Transverse colon (tissue), 4 donors: ENCODE measurements at regions of chr20 and their contacts with region 1.

Region 1: GRCh38 chr20:37498066-37498665 is 22.9 kb upstream of the NNAT start:
- DNase-seq: no peak
- H3K4me3 ChIP-seq: no peak overlapping the region
- H3K27ac ChIP-seq: no peak overlapping the region
- H3K4me1 ChIP-seq: peaks cover 0 to 5% (median 0%) of the 10 kb centered on the region in 4 donors
- H3K27me3 ChIP-seq: no peaks in the 10 kb centered on the region
- CTCF ChIP-seq: no peak
- EP300 ChIP-seq: no peak
- POLR2A ChIP-seq: no peak

Region 2: DNA sequence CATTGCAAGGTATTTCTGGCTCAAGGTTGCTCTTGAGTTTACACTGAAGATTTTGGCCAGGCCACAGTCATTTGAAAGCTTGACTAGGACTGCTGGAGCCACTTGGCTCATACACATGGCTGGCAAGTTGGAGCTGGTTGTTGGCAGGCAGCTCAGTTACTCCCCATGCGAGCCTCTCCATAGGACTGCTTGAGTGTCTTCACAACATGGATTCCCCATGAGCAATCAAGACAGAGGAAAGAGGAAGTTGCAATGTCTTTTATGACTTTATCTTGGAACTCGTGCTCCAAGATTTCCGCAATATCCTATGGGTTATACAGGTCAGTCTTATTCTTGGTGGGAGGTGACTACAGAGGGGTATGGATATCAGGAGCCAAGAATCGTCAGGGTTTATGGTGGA is 210.1 kb before region 1 on chr20:
- in situ Hi-C with region 1: no loop called
- intact Hi-C with region 1: no loop called
- DNase-seq: no peak
- H3K4me3 ChIP-seq: no peak overlapping the region
- H3K27ac ChIP-seq: no peak overlapping the region
- H3K4me1 ChIP-seq: peaks cover 0 to 14% (median 10%) of the 10 kb centered on the region in 4 donors
- H3K27me3 ChIP-seq: no peaks in the 10 kb centered on the region
- CTCF ChIP-seq: no peak
- EP300 ChIP-seq: no peak
- POLR2A ChIP-seq: no peak

Region 3: GRCh38 chr20:37327748-37328147 is 170.4 kb before region 1 on chr20:
- in situ Hi-C with region 1: no loop called
- intact Hi-C with region 1: no loop called
- DNase-seq: peak; percentile 80
- H3K4me3 ChIP-seq: no peak overlapping the region
- H3K27ac ChIP-seq: peak overlapping the region; percentile 72 to 88 (median 81)
- H3K4me1 ChIP-seq: peaks cover 18 to 33% (median 20%) of the 10 kb centered on the region in 4 donors
- H3K27me3 ChIP-seq: no peaks in the 10 kb centered on the region
- CTCF ChIP-seq: no peak
- EP300 ChIP-seq: no peak
- POLR2A ChIP-seq: no peak

Region 4: DNA sequence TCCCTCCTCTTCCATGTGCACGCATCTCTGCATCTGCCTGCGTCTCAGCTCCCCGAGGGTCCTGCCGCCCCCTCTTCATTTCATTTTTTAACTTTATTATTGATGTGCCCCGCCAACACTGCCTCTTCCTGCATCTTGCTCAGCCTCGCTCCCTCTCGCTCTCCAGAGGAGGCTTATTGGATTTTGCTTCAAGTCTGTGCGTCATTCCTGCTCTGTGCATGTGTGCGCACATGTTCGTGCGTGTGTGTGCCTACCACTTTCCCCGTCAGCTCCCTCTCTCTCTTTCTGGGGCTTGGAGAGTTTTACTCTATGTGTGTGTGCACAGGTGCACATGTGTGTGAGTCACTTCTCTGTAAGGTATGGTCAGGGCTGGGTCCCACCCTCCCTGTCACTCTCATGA is 48.9 kb before region 1 on chr20:
- in situ Hi-C with region 1: no loop called
- intact Hi-C with region 1: loop called (anchors 10 kb)
- DNase-seq: no peak
- H3K4me3 ChIP-seq: no peak overlapping the region
- H3K27ac ChIP-seq: no peak overlapping the region
- H3K4me1 ChIP-seq: no peaks in the 10 kb centered on the region
- H3K27me3 ChIP-seq: no peaks in the 10 kb centered on the region
- CTCF ChIP-seq: no peak
- EP300 ChIP-seq: no peak
- POLR2A ChIP-seq: no peak

Region 5: GRCh38 chr20:37552415-37552814 is 54.2 kb after region 1 on chr20:
- in situ Hi-C with region 1: no loop called
- intact Hi-C with region 1: no loop called
- DNase-seq: no peak
- H3K4me3 ChIP-seq: no peak overlapping the region
- H3K27ac ChIP-seq: no peak overlapping the region
- H3K4me1 ChIP-seq: peaks cover 0 to 8% (median 3%) of the 10 kb centered on the region in 4 donors
- H3K27me3 ChIP-seq: no peaks in the 10 kb centered on the region
- CTCF ChIP-seq: no peak
- EP300 ChIP-seq: no peak
- POLR2A ChIP-seq: no peak

Region 6: DNA sequence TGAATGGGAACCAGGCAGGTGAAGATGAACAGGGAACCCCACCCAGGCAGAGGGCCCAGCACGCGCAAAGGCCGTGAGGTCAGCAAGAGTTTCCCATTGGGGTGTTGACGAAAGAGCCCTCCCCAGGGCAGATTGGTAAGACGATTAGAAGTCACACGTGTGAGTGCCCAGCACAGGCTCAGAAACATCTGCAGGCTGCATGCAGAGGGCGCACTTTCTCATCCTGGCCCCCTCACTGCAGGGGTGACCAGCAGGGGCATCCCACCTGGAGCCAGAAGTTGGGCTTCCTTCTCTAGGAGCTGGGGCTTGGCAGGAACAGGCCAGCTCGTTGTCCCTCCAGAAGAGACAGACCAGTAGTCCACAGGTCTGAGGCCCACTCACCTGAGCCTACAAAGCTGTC is 443.2 kb after region 1 on chr20:
- in situ Hi-C with region 1: no loop called
- intact Hi-C with region 1: no loop called
- DNase-seq: no peak
- H3K4me3 ChIP-seq: no peak overlapping the region
- H3K27ac ChIP-seq: no peak overlapping the region
- H3K4me1 ChIP-seq: no peaks in the 10 kb centered on the region
- H3K27me3 ChIP-seq: no peaks in the 10 kb centered on the region
- CTCF ChIP-seq: no peak
- EP300 ChIP-seq: no peak
- POLR2A ChIP-seq: no peak